ENCODE measurements at regions of chr22 and their contacts with region 1.

Region 1: GRCh38 chr22:41697126-41697775 is 2.1 kb upstream of the MEI1 start:
- DNase-seq: peak; percentile 90 to 100
- H3K4me3 ChIP-seq: peak overlapping the region in 1 of 4 experiments; percentile 28; a peak in 1 of 8 replicates
- H3K27ac ChIP-seq: no peak overlapping the region
- H3K4me1 ChIP-seq: peaks cover 0 to 6% (median 4%) of the 10 kb centered on the region in 4 experiments; a peak in 5 of 7 replicates
- H3K27me3 ChIP-seq: peaks cover 0 to 10% (median 6%) of the 10 kb centered on the region in 4 experiments; a peak in 6 of 7 replicates
- CTCF ChIP-seq: peak; percentile 90
- EP300 ChIP-seq: no peak
- POLR2A ChIP-seq: no peak
- RAD21 ChIP-seq: peak; percentile 89 to 92

Region 2: DNA sequence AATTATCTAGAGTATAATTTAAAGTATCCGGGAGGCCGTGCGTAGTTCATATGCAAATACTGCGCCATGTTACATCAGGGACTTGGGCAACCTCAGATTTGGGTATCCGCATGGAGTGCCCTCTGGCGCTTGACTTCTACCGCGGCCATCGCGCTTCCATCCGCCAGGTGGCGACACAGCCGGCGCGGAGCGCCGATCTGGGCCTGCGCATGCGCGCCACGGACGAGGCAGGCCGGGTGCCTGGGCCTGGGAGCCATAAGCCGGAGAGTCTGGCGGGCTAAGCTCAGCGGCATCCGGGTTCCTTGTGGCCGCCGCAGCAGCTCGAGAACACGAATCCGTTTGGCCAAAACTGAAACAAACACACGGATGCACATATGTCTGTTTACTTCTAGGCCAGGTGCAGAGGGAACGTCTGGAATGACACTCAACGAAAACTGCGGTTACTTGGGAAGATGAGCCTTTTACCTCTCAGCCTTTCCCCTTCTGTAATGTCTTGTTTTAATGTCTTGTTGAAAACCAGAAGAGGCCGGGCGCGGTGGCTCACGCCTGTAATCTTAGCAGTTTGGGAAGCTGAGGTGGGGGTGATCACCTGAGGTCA is 30.5 kb before region 1 on chr22:
- CTCF ChIA-PET with region 1: interaction called, 14 read pairs
- POLR2A ChIA-PET with region 1: interaction called, 5 read pairs
- DNase-seq: peak; percentile 92 to 96
- H3K4me3 ChIP-seq: peak overlapping the region; percentile 15 to 43 (median 22); a peak in 3 of 8 replicates
- H3K27ac ChIP-seq: peak overlapping the region; percentile 84
- H3K4me1 ChIP-seq: peaks cover 0 to 8% (median 3%) of the 10 kb centered on the region in 4 experiments; a peak in 5 of 7 replicates
- H3K27me3 ChIP-seq: no peaks in the 10 kb centered on the region
- CTCF ChIP-seq: peak; percentile 91 to 100 (median 99)
- EP300 ChIP-seq: no peak
- POLR2A ChIP-seq: peak; percentile 51 to 74
- RAD21 ChIP-seq: peak; percentile 57 to 68

Region 3: GRCh38 chr22:41725510-41726110 is 28.4 kb after region 1 on chr22:
- CTCF ChIA-PET with region 1: interaction called, 18 read pairs
- POLR2A ChIA-PET with region 1: no interaction called
- DNase-seq: no peak
- H3K4me3 ChIP-seq: no peak overlapping the region
- H3K27ac ChIP-seq: no peak overlapping the region
- H3K4me1 ChIP-seq: no peaks in the 10 kb centered on the region
- H3K27me3 ChIP-seq: no peaks in the 10 kb centered on the region
- CTCF ChIP-seq: no peak
- EP300 ChIP-seq: no peak
- POLR2A ChIP-seq: no peak
- RAD21 ChIP-seq: no peak

Region 4: GRCh38 chr22:41762980-41763779 is 65.9 kb after region 1 on chr22:
- CTCF ChIA-PET with region 1: interaction called, 19 read pairs
- POLR2A ChIA-PET with region 1: no interaction called
- DNase-seq: peak; percentile 67 to 94
- H3K4me3 ChIP-seq: no peak overlapping the region
- H3K27ac ChIP-seq: no peak overlapping the region
- H3K4me1 ChIP-seq: no peaks in the 10 kb centered on the region
- H3K27me3 ChIP-seq: no peaks in the 10 kb centered on the region
- CTCF ChIP-seq: peak; percentile 71 to 94 (median 84)
- EP300 ChIP-seq: no peak
- POLR2A ChIP-seq: no peak
- RAD21 ChIP-seq: peak; percentile 42 to 64; a peak in 3 of 4 replicates

Region 5: GRCh38 chr22:41826430-41827383 is 129.5 kb after region 1 on chr22:
- CTCF ChIA-PET with region 1: interaction called, 16 read pairs
- POLR2A ChIA-PET with region 1: no interaction called
- DNase-seq: no peak
- H3K4me3 ChIP-seq: no peak overlapping the region
- H3K27ac ChIP-seq: no peak overlapping the region
- H3K4me1 ChIP-seq: peaks cover 4 to 11% (median 6%) of the 10 kb centered on the region in 4 experiments
- H3K27me3 ChIP-seq: no peaks in the 10 kb centered on the region; a peak in 1 of 7 replicates
- CTCF ChIP-seq: no peak
- EP300 ChIP-seq: no peak
- POLR2A ChIP-seq: no peak
- RAD21 ChIP-seq: no peak

Region 6: GRCh38 chr22:41857155-41857859 is 160.1 kb after region 1 on chr22:
- CTCF ChIA-PET with region 1: interaction called, 34 read pairs
- POLR2A ChIA-PET with region 1: no interaction called
- DNase-seq: peak; percentile 43 to 63
- H3K4me3 ChIP-seq: no peak overlapping the region
- H3K27ac ChIP-seq: no peak overlapping the region
- H3K4me1 ChIP-seq: peaks cover 0 to 1% (median 0%) of the 10 kb centered on the region in 4 experiments; a peak in 1 of 7 replicates
- H3K27me3 ChIP-seq: no peaks in the 10 kb centered on the region
- CTCF ChIP-seq: peak; percentile 35 to 75 (median 59)
- EP300 ChIP-seq: no peak
- POLR2A ChIP-seq: no peak
- RAD21 ChIP-seq: peak; percentile 53 to 62

Measured in H1 (cell line).